GM12878 (cell line): ENCODE measurements at regions of chr5 and their contacts with region 1.

Region 1: DNA sequence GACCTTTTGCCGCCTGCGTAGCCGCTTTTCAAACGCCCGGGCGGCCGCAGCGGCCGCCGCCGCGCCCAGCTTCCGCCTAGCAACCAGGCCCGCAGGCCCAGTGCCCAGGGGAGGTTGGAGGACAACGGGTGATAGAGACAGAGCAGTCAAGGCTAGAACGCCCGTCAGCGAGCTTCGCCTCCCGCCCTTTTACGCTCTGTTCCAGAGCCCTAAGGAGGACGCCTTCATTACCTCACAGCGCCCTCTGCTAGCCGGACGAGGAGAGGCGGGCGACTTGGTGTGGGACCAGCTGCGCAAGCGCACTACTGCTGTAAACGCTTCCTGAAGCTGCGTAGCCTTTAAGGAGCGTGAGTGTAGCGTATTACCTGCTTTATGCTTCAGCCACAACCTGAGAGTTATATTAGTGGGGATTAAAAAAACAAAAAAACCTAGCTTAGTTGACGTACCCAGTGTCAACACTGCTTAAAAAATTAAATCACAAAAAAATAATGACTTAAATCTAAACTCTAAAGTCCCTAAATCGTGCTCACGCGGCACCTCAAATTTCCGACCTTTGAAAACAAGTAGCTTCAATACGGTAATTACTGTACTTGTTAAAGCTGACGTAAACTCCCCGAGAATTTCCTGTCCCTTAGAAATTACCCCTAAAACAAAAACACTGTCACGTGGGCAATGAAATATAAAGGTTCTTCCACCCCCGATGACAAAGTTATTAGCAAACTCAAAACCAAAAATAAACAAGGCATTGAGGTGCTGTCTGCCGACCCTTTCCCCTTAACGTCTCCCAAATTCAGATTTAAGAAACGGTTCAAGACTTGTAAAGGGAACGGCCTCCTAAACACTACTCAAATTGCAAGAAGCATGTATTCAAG is at the start of gene CEP120:
- DNase-seq: peak; percentile 98
- ATAC-seq: peak; percentile 97
- H3K4me3 ChIP-seq: peak within 1 kb of the TSS; percentile 83
- H3K27ac ChIP-seq: peak within 1 kb of the TSS; percentile 81
- H3K4me1 ChIP-seq: no peaks in the 10 kb centered on the region; the same call in 1 of the 2 replicates
- H3K27me3 ChIP-seq: no peaks in the 10 kb centered on the region
- CTCF ChIP-seq: peak; percentile 81 to 99 (median 95); a peak in 5 of 6 replicates
- EP300 ChIP-seq: peak in 1 of 2 experiments; percentile 44; a peak in 1 of 4 replicates
- POLR2A ChIP-seq: peak; percentile 91
- RAD21 ChIP-seq: peak; percentile 65
- polyA plus RNA-seq, gene CEP120: 4.1 to 4.3 TPM

Region 2: DNA sequence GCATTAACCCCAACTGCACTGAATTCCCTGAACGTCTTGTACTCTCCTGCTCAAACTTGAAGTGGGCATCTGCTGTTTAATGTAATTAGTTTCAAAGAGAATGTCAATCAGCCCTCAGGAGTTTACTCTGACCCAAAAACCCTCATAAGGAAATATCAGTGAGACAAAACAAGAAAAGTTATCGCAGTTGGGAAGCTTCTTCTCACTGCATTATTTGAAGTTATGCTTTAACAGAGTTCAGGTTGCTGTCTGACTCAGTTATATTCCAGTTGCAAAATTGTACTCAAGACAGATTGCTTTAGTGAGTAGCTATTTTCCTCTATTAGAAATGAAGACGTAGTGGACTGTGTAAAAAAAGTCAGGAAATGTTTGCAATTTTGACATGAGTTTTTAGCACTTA is 439.1 kb before region 1 on chr5:
- CTCF ChIA-PET with region 1: no interaction called
- POLR2A ChIA-PET with region 1: no interaction called
- RAD21 ChIA-PET with region 1: no interaction called
- SMC1A ChIA-PET with region 1: no interaction called
- in situ Hi-C with region 1: no loop called
- intact Hi-C with region 1: no loop called
- DNase-seq: no peak
- ATAC-seq: peak; percentile 38
- H3K4me3 ChIP-seq: no peak overlapping the region
- H3K27ac ChIP-seq: no peak overlapping the region
- H3K4me1 ChIP-seq: peaks cover 20% of the 10 kb centered on the region
- H3K27me3 ChIP-seq: no peaks in the 10 kb centered on the region
- CTCF ChIP-seq: no peak
- EP300 ChIP-seq: no peak
- POLR2A ChIP-seq: no peak
- RAD21 ChIP-seq: no peak

Region 3: DNA sequence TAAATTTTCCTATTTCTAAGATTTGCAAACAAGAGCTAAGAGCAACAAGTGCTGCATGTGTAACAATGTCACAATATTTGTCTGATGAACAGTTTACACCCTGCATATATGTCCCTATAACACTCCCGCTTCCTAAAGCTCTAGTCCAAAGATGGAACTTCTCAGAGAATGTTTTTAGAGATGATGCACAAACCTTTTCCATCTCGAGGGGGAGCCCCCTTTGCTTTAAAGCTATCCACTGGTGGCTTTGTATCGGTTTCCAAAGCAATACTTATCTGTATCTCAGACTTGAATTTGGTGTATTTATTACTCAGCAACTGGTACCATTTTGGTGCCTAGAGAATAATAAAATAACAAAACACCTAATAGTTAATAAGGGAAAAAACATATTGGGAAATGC is 11.3 kb before region 1 on chr5:
- CTCF ChIA-PET with region 1: interaction called, 5 read pairs
- POLR2A ChIA-PET with region 1: no interaction called
- RAD21 ChIA-PET with region 1: interaction called, 4 read pairs
- SMC1A ChIA-PET with region 1: interaction called, 30 read pairs
- in situ Hi-C with region 1: no loop called
- intact Hi-C with region 1: no loop called
- DNase-seq: no peak
- ATAC-seq: no peak; the same call in 2 of the 3 replicates
- H3K4me3 ChIP-seq: no peak overlapping the region
- H3K27ac ChIP-seq: no peak overlapping the region
- H3K4me1 ChIP-seq: no peaks in the 10 kb centered on the region
- H3K27me3 ChIP-seq: no peaks in the 10 kb centered on the region
- CTCF ChIP-seq: no peak
- EP300 ChIP-seq: no peak
- POLR2A ChIP-seq: no peak
- RAD21 ChIP-seq: no peak

Region 4: GRCh38 chr5:123438902-123439301 is 15.4 kb after region 1 on chr5:
- CTCF ChIA-PET with region 1: interaction called, 14 read pairs
- POLR2A ChIA-PET with region 1: no interaction called
- RAD21 ChIA-PET with region 1: interaction called, 10 read pairs
- SMC1A ChIA-PET with region 1: interaction called, 5 read pairs
- in situ Hi-C with region 1: no loop called
- intact Hi-C with region 1: no loop called
- DNase-seq: no peak
- ATAC-seq: peak; percentile 71
- H3K4me3 ChIP-seq: no peak overlapping the region
- H3K27ac ChIP-seq: no peak overlapping the region
- H3K4me1 ChIP-seq: peaks cover 17% of the 10 kb centered on the region
- H3K27me3 ChIP-seq: no peaks in the 10 kb centered on the region
- CTCF ChIP-seq: no peak
- EP300 ChIP-seq: no peak
- POLR2A ChIP-seq: no peak
- RAD21 ChIP-seq: no peak

Region 5: GRCh38 chr5:123450640-123451039 is 27.1 kb after region 1 on chr5:
- CTCF ChIA-PET with region 1: interaction called, 16 read pairs
- POLR2A ChIA-PET with region 1: interaction called, 15 read pairs
- RAD21 ChIA-PET with region 1: interaction called, 15 read pairs
- SMC1A ChIA-PET with region 1: interaction called, 20 read pairs
- in situ Hi-C with region 1: no loop called
- intact Hi-C with region 1: loop called (anchors 1 kb)
- DNase-seq: no peak
- ATAC-seq: no peak
- H3K4me3 ChIP-seq: no peak overlapping the region
- H3K27ac ChIP-seq: peak overlapping the region; percentile 6; the same call in 1 of the 2 replicates
- H3K4me1 ChIP-seq: peaks cover 40% of the 10 kb centered on the region
- H3K27me3 ChIP-seq: no peaks in the 10 kb centered on the region
- CTCF ChIP-seq: no peak
- EP300 ChIP-seq: no peak
- POLR2A ChIP-seq: no peak
- RAD21 ChIP-seq: no peak

Region 6: DNA sequence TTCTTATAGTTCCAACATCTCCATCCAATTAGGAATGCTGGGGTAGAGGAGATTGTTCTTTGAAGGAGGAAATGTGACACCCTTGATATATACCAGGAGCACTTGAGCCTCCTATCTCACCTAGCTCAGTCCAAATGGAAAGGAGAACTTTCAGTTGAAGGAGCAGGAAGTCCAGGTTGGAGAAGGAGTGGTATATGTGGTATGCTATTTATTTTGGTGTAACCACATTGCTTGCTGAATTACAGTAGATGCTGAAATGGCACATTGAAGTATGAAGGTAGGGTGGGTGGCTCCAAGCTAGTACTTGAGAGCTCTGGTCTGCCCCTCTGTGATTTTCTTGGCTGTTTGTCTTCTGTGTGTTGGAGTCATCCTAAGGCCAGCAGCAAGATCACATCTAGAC is 94.6 kb after region 1 on chr5:
- CTCF ChIA-PET with region 1: interaction called, 10 read pairs
- POLR2A ChIA-PET with region 1: interaction called, 12 read pairs
- RAD21 ChIA-PET with region 1: interaction called, 30 read pairs
- SMC1A ChIA-PET with region 1: interaction called, 27 read pairs
- in situ Hi-C with region 1: no loop called
- intact Hi-C with region 1: no loop called
- DNase-seq: no peak
- ATAC-seq: peak; percentile 19
- H3K4me3 ChIP-seq: peak overlapping the region; percentile 48; the same call in 1 of the 2 replicates
- H3K27ac ChIP-seq: peak overlapping the region; percentile 70
- H3K4me1 ChIP-seq: peaks cover 41% of the 10 kb centered on the region
- H3K27me3 ChIP-seq: no peaks in the 10 kb centered on the region
- CTCF ChIP-seq: no peak
- EP300 ChIP-seq: no peak
- POLR2A ChIP-seq: no peak
- RAD21 ChIP-seq: no peak

Region 7: DNA sequence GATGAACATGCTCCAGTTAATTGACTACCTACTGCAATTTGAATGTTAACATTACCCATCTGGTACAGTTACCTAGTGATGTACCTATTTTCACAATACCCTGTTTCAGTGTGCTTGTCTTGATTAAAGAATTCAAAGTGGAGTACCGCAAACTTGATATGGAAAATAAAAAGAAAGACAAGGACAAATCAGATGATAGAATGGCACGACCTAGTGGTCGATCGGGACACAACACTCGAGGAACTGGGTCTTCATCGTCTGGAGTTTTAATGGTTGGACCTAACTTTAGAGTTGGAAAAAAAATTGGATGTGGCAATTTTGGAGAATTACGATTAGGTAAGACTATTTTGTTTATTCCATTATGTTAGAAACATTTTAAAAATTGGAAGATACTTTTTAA is 122.0 kb after region 1 on chr5:
- CTCF ChIA-PET with region 1: interaction called, 37 read pairs
- POLR2A ChIA-PET with region 1: interaction called, 16 read pairs
- RAD21 ChIA-PET with region 1: interaction called, 16 read pairs
- SMC1A ChIA-PET with region 1: interaction called, 52 read pairs
- in situ Hi-C with region 1: no loop called
- intact Hi-C with region 1: loop called (anchors 1 kb)
- DNase-seq: no peak
- ATAC-seq: no peak
- H3K4me3 ChIP-seq: no peak overlapping the region
- H3K27ac ChIP-seq: no peak overlapping the region
- H3K4me1 ChIP-seq: peaks cover 14% of the 10 kb centered on the region
- H3K27me3 ChIP-seq: no peaks in the 10 kb centered on the region
- CTCF ChIP-seq: peak; percentile 26 to 39 (median 38); a peak in 5 of 6 replicates
- EP300 ChIP-seq: no peak
- POLR2A ChIP-seq: no peak
- RAD21 ChIP-seq: 0 out of 2 replicates have a peak, but pooled peaks have one; percentile 12